Cardiac septum (tissue), 1 donor: ENCODE measurements at regions of chr1 and their contacts with region 1.

Region 1: DNA sequence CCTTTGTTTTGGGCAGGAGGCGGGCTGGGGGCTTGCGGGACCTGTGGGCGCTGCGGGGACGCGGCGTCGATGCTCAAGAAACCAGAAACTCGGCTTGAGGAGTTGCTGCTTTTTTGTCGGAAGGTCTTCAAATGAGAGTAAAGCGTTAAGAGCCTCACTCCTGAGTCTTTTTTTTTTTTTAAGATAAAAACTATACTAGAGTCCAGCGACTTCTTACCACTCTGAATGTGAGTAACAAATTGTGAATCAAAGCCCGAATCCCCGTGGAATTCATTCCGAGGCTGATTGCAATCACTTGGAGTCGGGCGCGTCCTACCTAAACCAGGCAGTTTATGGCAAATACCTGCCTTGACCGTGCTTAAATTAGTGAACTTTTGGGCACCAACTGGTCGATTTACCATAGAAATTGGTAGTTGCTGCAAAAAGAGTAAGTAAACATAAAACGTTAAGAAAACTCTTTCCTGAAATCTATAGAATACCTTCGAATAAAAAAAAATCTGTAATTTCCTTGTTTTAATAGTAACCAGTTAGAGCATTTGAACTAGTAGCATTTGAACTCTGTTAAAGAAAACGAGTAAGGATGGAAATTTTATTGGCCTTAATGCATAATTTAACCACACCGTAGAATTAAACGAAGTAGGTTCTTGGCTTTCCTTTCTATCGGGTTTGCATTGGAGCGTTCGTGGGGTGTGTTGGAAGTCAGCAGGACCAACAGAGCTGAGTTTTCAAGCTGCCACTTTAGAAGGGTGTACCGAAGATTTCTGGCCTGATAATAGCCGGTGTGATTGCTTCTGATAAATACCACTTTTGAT is 769 bp downstream of the GPSM2 start:
- DNase-seq: no peak

Region 2: GRCh38 chr1:108828022-108828961 is 49.3 kb before region 1 on chr1:
- intact Hi-C with region 1: loop called (anchors 5 kb)
- DNase-seq: peak; percentile 84

Region 3: DNA sequence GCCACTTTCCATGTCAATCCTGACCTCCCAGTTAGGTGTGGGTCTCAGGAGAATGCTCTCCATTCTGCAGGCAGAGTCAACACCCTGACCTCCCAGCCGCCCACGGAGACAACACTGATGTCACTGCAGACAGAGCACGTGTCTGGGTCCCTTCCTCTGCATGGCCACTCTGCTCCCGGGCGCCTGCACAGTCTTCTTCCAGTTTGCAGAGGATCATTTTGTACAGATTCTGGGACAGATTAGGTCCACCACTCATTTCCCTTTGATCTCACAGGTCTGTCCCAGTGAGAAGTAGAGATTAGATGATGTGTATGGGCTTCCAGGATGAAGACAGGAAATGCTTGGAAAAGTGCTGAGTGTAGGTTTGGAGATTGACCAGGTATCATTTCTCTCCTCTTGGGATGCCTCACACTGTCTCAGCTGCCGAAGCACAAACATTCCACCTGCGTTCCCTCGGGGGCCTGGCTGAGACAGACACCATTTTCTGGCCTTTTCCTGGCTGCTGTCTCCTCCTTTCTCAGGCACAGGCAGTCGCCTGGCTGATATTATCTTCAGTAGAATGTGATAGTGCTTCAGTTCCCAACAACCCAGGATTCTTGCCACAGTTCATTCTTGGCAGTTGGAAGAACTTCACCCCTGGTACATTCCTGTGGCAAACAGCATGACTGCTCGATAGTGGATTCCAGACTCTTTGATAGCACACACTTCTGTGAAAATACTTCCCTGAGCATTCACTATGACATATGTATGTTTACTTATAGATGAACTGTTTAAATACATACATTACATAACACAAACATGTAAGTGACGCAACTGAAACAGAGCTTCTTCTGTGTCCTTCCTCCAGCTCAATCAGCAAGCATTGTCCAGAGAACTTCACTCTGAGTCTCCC is 421.4 kb after region 1 on chr1:
- intact Hi-C with region 1: no loop called
- DNase-seq: peak; percentile 81